Common myeloid progenitor, CD34-positive (primary cell): ENCODE measurements at regions of chr3 and their contacts with region 1.

Region 1: DNA sequence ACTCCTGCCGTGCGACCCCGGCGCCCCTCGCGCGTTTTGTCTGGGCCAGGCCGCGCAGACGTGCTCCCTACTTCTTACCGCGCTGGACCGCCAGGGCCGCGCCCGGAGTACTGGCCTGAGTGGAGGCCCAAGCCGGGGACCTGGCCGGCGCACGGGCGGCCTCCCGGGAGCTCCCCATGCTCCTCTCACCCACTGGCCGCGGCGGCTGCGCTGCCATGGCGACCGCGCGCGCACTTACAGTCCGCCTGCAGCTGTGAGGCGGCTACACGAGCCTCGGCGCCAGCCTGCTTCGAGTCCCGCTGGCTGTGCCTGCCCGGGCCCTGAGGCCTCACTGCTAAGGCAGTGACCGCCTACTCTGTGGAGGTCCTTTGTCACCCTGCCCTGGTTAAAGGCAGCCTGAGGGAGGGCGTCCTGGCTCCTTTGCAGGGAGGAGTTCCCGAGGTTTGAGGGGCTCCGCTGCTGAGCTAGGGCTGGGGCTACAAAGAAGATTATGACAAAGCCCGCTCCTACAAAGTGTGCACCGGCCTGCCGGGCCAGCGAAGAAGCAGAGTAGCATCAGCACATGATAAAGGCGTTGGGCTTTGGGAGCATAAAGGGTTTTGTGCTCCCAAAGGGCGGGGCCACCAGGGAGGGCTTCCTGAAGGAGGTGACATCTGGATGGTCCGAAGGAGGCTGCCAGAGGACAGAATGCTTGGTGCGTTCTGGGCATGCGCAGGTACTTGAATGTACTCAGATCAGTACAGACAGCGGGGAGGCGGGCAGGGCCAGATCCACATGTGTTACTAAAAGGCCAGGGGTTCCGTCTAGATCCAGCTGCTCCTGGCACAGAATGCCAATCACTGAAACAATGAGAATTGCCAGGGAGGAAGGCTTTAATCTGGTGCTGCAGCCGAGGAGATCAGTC is at the starts of genes LRRC34 and LRRIQ4:
- DNase-seq: peak; percentile 70 to 80 (median 78)
- H3K4me3 ChIP-seq: peak within 1 kb of the TSS; percentile 70 to 96 (median 84)
- H3K27ac ChIP-seq: peak within 1 kb of the TSS; percentile 56 to 85
- H3K4me1 ChIP-seq: peaks cover 8 to 35% (median 32%) of the 10 kb centered on the region in 4 experiments
- H3K27me3 ChIP-seq: no peaks in the 10 kb centered on the region

Region 2: DNA sequence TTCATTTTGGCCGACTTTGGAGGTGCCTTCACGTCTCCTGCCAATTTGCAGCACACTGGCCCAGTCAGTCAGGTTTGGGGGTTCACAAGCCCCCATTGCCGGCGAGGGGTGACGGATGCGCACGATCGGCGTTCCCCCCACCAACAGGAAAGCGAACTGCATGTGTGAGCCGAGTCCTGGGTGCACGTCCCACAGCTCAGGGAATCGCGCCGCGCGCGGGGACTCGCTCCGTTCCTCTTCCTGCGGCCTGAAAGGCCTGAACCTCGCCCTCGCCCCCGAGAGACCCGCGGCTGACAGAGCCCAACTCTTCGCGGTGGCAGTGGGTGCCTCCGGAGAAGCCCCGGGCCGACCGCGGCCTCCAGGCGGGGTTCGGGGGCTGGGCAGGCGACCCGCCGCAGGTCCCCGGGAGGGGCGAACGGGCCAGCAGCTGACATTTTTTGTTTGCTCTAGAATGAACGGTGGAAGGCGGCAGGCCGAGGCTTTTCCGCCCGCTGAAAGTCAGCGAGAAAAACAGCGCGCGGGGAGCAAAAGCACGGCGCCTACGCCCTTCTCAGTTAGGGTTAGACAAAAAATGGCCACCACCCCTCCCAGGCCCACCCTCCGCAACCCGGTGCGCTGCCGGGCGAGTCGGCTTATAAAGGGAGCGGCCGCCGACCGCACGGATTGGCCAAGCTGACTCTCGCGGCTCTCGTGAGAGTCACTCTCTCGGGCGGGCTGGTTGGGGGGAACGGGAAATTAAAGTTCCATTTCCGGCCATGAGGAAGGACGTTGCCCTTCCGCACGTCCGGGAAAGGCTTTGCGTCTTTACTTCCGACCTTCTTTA is 47.9 kb before region 1 on chr3 and contains the start of gene TERC:
- CTCF ChIA-PET with region 1: interaction called, 11 read pairs
- POLR2A ChIA-PET with region 1: no interaction called
- DNase-seq: peak; percentile 90 to 93 (median 92)
- H3K4me3 ChIP-seq: peak within 1 kb of the TSS; percentile 62 to 98 (median 92)
- H3K27ac ChIP-seq: peak within 1 kb of the TSS; percentile 29 to 88
- H3K4me1 ChIP-seq: peaks cover 4 to 20% (median 10%) of the 10 kb centered on the region in 4 experiments
- H3K27me3 ChIP-seq: no peaks in the 10 kb centered on the region